Heart left ventricle (tissue), 16 donors: ENCODE measurements at regions of chr7 and their contacts with region 1.

Region 1: DNA sequence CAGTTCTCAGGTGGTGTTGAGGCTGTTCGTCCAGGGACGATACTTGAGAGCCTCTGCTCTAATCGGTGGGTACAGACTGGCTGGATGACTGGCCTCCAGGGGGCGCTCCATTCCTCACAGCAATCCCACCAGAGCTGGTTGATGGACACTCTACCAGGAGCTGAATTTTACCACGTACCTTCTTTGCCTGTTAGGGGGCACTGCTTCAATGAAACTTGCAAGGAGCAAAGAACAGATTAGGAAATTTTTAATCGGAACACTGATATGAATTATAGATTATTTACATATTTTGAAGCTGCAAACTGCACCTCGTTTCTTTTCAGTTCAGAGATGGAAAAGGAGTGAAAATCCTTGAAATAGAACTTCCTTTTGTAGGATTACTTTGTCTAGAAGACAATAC is 44.9 kb downstream of the KBTBD2 start:
- DNase-seq: peak; percentile 79 to 93 (median 90)
- ATAC-seq: peak; percentile 90 to 100 (median 100)
- H3K4me3 ChIP-seq: peak overlapping the region in 2 of 12 donors; percentile 6 to 25
- H3K27ac ChIP-seq: no peak overlapping the region
- H3K4me1 ChIP-seq: peaks cover 0 to 8% (median 3%) of the 10 kb centered on the region in 12 donors
- H3K27me3 ChIP-seq: no peaks in the 10 kb centered on the region
- CTCF ChIP-seq: peak; percentile 73 to 98 (median 94)
- POLR2A ChIP-seq: no peak

Region 2: DNA sequence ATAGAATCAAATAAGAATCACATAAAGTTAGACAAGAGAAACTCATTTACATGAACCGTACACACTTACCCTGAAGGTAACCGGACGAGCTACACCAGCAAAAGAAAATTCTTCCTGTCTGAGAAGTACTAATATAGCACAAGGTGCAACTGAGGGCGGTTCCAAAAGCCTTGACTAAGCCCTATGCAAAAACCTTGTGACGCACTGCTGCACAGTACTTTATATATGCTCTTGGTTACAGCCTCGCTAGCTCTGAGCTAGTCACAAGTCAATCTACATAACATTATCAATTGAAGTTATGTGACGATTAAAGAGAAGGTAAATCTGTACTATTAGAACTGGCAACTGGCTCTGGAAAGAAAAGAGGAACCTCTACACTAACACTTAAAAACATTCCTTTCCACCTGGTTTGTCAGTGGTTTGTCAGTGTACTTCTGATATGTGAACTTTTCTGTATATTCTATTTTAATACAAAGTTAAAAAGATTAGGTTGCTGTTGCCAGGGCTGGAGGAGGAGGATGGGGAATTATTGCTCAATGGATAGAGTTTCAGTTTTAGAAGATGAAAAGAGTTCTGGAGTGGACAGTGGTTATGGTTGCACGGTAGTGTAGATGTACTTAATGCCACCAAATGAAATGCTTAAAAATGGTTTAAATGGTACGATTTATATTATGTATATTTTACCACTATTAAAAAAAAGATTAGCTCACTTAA is 194.3 kb after region 1 on chr7:
- intact Hi-C with region 1: loop called in 1 of 10 experiments (anchors 10 kb)
- DNase-seq: peak in 2 of 5 donors; percentile 19 to 37
- ATAC-seq: peak; percentile 68 to 84 (median 82)
- H3K4me3 ChIP-seq: peak overlapping the region in 10 of 12 donors; percentile 6 to 60 (median 52)
- H3K27ac ChIP-seq: peak overlapping the region in 11 of 12 donors; percentile 4 to 83 (median 67)
- H3K4me1 ChIP-seq: peaks cover 0 to 67% (median 52%) of the 10 kb centered on the region in 12 donors
- H3K27me3 ChIP-seq: no peaks in the 10 kb centered on the region
- CTCF ChIP-seq: no peak
- POLR2A ChIP-seq: no peak

Region 3: GRCh38 chr7:33050535-33051318 is 204.0 kb after region 1 on chr7:
- intact Hi-C with region 1: loop called in 3 of 10 experiments (anchors 1 to 10 kb)
- DNase-seq: no peak
- ATAC-seq: peak in 3 of 4 donors; percentile 48 to 76 (median 66)
- H3K4me3 ChIP-seq: peak overlapping the region in 4 of 12 donors; percentile 11 to 47 (median 14)
- H3K27ac ChIP-seq: peak overlapping the region in 8 of 12 donors; percentile 8 to 85 (median 42)
- H3K4me1 ChIP-seq: peaks cover 0 to 54% (median 12%) of the 10 kb centered on the region in 12 donors
- H3K27me3 ChIP-seq: no peaks in the 10 kb centered on the region
- CTCF ChIP-seq: peak; percentile 48 to 76 (median 68)
- POLR2A ChIP-seq: no peak